ENCODE measurements at regions of chr19 and their contacts with region 1.

Region 1: DNA sequence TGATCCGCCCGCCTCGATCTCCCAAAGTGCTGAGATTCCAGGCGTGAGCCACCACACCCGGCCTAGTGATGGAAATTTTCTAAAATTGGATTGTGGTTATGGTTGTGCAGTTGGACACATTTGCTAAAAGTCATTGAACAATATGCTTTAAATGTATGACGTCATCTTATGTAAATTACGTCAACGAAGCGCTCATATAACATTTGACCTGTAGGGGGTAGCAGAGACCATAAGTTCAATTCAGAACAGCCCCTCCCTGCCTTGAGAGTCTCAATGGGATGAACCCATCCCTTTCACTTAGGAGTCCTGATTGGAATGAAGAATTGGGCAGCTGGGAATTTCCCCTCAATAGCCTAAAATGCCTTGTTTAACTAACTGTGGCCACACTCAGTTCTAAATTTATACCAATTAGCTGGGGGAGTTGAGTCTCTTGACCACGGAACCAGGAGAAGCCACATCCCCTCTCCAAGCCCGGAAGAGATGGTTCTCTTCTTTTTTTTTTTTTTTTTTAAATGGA is 15.3 kb upstream of the TLE6 start:
- DNase-seq: peak; percentile 78
- H3K4me3 Mint-ChIP-seq: peak overlapping the region; percentile 56
- H3K27ac Mint-ChIP-seq: peak overlapping the region; percentile 78
- H3K4me1 Mint-ChIP-seq: peaks cover 5% of the 10 kb centered on the region
- H3K27me3 Mint-ChIP-seq: no peaks in the 10 kb centered on the region

Region 2: GRCh38 chr19:2994588-2995131 is 32.6 kb after region 1 on chr19:
- CTCF ChIA-PET with region 1: no interaction called
- POLR2A ChIA-PET with region 1: no interaction called
- DNase-seq: no peak
- H3K4me3 Mint-ChIP-seq: no peak overlapping the region
- H3K27ac Mint-ChIP-seq: no peak overlapping the region
- H3K4me1 Mint-ChIP-seq: no peaks in the 10 kb centered on the region
- H3K27me3 Mint-ChIP-seq: no peaks in the 10 kb centered on the region

Region 3: DNA sequence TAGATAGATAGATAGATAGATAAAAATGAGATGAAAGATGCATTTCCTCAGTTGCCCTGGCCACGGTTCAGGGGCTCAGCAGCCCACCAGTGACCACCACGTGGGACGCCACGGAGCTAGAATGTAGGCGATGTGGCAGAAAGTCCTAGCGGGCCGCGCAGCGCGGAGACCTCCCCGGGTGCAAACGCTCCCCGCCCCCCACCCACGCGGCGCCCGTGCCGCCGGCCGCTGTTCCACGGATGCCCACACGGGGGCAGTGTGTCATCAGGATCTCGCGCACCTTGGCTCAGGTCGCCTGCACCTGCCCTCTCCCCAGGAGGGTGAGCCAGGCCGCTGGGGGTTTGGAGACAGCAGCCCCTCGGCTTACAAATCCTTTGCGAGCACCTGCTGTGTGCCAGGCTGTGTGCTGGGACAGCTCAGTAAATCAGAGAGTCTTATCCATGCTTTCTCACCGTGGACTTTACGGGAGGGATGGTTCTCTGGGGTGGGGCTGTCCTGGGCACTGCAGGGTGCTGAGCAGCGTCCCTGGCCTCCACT is 113.9 kb after region 1 on chr19:
- CTCF ChIA-PET with region 1: no interaction called
- POLR2A ChIA-PET with region 1: no interaction called
- DNase-seq: peak; percentile 75
- H3K4me3 Mint-ChIP-seq: no peak overlapping the region
- H3K27ac Mint-ChIP-seq: no peak overlapping the region
- H3K4me1 Mint-ChIP-seq: peaks cover 8% of the 10 kb centered on the region
- H3K27me3 Mint-ChIP-seq: no peaks in the 10 kb centered on the region

Region 4: GRCh38 chr19:3102228-3103140 is 140.4 kb after region 1 on chr19:
- CTCF ChIA-PET with region 1: interaction called, 18 read pairs
- POLR2A ChIA-PET with region 1: no interaction called
- DNase-seq: no peak
- H3K4me3 Mint-ChIP-seq: no peak overlapping the region
- H3K27ac Mint-ChIP-seq: no peak overlapping the region
- H3K4me1 Mint-ChIP-seq: peaks cover 12% of the 10 kb centered on the region
- H3K27me3 Mint-ChIP-seq: peaks cover 16% of the 10 kb centered on the region

Measured in activated CD4-positive, alpha-beta T cell treated with anti-CD3 and anti-CD28 coated beads, Interleukin-2, amount 10 ng/mL, durations not matched to agents 7 days and 5 days (primary cell).